ENCODE measurements at regions of chr5 and their contacts with region 1.

Region 1: GRCh38 chr5:149429839-149430721 is 51.0 kb upstream of the IL17B start:
- DNase-seq: peak; percentile 85
- ATAC-seq: peak; percentile 20 to 24

Region 2: DNA sequence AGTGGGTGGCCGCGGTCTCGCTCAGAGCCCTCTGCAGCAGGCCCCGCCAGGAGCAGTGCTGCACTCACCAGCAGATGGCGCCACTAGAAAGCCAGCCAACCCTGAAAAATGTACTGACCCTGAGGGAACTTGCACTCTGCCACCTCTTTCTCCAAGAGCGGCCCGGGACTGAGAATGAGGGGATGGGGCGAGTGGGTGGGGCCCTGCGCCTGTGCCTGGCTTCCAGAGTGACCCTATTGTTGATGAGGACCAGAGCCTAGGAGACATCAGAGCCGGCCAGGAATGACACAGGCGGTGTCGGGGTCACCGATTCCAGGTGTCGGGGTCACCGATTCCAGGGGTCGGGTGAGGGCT is 48.1 kb before region 1 on chr5:
- intact Hi-C with region 1: loop called (anchors 1 to 2 kb)
- DNase-seq: peak; percentile 84
- ATAC-seq: peak; percentile 76 to 78

Region 3: GRCh38 chr5:149387081-149387631 is 42.9 kb before region 1 on chr5:
- intact Hi-C with region 1: loop called in 1 of 2 experiments (anchors 1 kb)
- DNase-seq: peak; percentile 51
- ATAC-seq: peak; percentile 32 to 45